ENCODE measurements at regions of chr1 and their contacts with region 1.

Region 1: DNA sequence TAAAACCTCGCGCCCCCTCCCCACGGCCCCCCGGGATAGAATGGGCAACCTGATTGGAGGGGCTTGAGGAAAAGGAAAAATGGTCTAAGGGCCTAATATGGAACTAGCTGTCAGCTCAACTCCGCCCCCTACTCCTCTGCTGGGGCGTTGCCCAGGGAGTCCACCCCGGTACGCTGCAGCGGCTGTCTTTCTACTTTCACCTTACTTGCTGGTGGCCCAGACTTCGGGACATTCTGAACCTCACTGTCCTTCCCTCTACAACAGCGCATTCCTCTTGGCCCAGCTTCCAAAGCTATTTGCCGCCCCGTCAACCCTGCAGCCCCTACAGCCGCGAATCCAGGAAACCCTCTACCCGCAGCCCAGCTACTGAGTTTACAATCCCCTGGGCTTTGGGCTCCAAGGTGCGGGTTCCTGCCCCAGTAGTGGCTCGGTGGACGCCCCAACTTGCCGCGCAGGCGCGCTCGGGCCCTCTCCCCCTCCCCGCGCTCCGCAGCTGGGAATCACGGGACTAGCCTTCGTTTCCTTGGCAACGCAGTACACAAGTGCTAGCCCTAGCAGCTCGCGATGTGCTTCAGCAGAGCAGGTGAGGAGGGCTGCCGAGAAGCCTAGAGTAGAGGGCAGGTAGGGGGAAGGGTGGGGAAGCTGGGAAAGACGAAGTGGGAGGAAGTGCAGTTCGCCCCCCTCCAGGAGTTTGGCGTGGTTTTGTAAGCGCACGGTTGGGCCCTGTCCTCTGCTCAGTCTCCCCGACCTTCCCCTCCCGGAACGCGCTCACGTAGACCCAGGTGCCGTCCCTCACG is 55.6 kb downstream of the CHIA start:
- DNase-seq: peak; percentile 72
- H3K4me3 Mint-ChIP-seq: peak overlapping the region; percentile 79
- H3K27ac Mint-ChIP-seq: peak overlapping the region; percentile 73
- H3K4me1 Mint-ChIP-seq: no peaks in the 10 kb centered on the region
- H3K27me3 Mint-ChIP-seq: peaks cover 13% of the 10 kb centered on the region
- CTCF ChIP-seq: no peak

Region 2: DNA sequence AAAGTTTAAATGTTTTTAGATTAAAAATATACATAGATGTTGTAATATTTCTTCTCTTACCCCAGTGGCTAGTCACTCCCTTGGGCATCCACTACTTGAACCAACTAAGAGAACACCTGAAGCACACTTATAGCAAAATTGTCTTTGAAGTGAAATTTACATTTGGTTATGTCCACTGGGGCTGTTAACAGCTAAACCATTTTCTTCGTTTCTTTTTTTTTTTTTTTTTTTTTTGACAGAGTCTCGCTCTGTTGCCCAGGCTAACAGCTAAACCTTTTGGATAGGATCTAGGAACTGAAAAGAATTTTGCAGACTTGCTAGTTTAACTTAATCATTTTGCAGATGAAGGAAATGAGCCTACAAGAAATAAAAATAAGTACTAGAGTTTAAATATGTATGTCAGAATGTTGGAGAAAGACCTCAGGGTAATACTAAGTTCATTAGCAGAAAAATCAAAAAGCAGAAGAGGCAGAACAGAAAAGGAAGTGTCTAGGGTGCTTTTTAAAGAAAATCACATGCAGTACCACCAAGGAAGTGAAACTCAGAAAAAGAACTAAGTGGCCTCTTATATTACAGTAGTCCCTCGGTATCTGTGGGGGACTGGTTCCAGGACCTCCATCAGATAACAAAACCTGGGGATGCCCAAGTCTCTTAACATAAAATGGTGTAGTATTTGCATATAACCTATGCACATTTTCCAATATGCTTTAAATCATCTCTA is 218.2 kb before region 1 on chr1:
- CTCF ChIA-PET with region 1: no interaction called
- intact Hi-C with region 1: no loop called
- DNase-seq: no peak
- H3K4me3 Mint-ChIP-seq: no peak overlapping the region
- H3K27ac Mint-ChIP-seq: no peak overlapping the region
- H3K4me1 Mint-ChIP-seq: no peaks in the 10 kb centered on the region
- H3K27me3 Mint-ChIP-seq: no peaks in the 10 kb centered on the region
- CTCF ChIP-seq: no peak

Region 3: GRCh38 chr1:111399792-111400610 is 53.7 kb after region 1 on chr1:
- CTCF ChIA-PET with region 1: no interaction called
- intact Hi-C with region 1: loop called (anchors 5 kb)
- DNase-seq: peak; percentile 49
- H3K4me3 Mint-ChIP-seq: peak overlapping the region; percentile 5
- H3K27ac Mint-ChIP-seq: no peak overlapping the region
- H3K4me1 Mint-ChIP-seq: no peaks in the 10 kb centered on the region
- H3K27me3 Mint-ChIP-seq: peaks cover 74% of the 10 kb centered on the region
- CTCF ChIP-seq: peak; percentile 25